HEK293T (cell line): ENCODE measurements at regions of chrX and their contacts with region 1.

Region 1: GRCh38 chrX:38318196-38318595 is 9.1 kb downstream of the RPGR start:
- DNase-seq: no peak

Region 2: DNA sequence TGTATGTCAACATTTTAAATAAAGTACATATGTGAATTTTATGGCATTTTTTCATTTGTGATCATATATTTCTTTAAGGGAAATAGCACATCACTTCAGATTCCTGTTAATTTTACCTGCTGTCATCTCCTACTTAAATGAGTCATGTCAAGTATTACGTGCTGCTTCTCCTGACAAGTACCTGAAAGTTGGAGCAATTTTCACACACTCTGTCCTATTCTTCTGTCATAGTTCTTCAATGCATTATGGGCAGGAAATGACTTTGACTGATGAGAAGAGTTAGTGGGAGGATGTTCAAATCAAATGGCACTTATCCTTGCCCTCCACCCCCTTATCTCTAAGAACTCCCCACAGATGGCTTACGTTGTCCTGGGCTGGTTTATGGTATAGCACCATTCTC is 376.0 kb before region 1 on chrX:
- CTCF ChIA-PET with region 1: no interaction called
- POLR2A ChIA-PET with region 1: no interaction called
- DNase-seq: no peak

Region 3: DNA sequence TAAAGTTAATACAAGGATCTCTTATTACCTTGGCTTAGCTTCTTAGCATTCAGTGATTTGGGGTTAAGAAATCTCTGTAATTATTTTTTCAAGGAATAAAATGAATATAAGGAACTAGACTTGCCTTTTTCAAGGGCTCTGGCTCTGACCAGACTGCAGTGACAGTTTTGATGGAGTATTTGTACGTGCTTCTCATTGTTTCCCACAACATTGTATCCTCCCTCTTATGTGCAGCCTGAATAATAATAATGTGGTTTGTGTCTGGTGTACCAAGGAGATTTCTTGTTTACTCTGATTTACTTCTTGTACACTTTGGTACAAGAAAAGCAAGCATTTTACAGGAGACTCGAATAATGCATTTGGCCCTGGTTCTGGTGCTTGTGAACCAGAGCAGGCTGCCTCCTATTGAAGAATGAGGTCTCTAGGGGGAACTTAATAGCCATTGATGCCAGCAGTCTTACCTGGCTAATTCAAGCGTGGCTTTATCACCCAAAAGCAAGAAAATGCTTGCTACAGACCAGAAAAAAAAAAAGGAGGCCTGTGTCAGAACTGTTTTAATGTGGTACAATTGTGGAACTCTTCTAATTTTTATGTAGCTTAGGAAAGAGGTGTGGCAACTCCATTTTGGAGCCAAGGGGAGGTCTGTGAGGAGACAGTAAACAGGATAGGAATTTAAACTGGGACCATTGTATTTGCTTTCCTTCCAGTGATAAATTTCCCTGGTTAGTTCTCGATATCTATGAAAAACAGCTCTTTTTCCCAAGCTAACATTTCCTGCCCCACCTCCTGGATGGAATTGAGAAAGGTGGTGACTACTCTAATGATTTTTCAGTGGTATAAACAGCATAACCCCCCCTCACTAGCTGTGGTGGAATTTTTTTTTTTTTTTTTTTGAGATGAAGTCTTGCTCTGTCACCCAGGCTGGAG is 39.8 kb after region 1 on chrX:
- CTCF ChIA-PET with region 1: interaction called, 10 read pairs
- POLR2A ChIA-PET with region 1: no interaction called
- DNase-seq: no peak